ENCODE measurements at regions of chr19 and their contacts with region 1.

Region 1: DNA sequence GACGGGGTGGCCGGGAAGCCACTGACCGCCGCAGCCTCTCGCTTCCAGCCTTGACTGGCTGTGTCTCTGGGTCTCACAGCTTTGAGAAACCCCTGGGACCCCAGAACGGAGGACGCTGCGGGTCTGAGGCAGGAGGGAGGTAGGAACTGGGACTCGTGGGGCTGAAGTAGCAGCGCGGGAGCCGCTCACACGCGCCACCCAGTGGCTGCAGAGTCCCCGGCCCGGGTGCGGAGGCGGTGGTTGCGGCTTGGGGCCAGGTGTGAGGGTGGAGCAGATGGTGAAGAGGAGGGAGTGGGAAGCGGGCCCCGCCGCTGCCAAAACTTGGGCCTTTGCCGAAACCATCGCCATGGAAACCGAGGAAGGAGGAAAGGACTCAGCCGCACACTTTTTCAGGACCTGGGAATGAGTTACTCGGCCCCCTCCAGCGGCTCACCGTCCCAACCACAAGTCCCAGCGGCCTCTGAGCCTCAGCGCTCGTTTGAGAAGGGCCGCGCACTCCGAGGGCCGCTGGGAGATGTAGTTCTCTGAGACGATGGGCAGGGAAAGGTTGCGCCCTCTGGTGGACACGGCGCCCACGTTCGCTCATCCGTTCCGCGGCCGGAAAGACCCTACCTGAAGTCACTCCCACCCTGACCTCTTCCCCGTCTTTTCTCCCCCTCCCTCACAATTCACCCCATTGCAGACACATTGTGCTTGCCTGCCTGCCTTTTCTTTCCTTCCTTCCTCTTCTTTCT is 2.2 kb upstream of the SLC17A7 start:
- DNase-seq: peak; percentile 90 to 98 (median 95)
- H3K4me3 ChIP-seq: peak overlapping the region; percentile 45 to 83 (median 68)
- H3K27ac ChIP-seq: peak overlapping the region in 45 of 59 donors; percentile 1 to 87 (median 59)
- H3K27me3 ChIP-seq: peaks cover 0 to 41% (median 24%) of the 10 kb centered on the region in 45 donors
- CTCF ChIP-seq: peak; percentile 64 to 98 (median 86)

Region 2: GRCh38 chr19:48993175-48994034 is 450.1 kb before region 1 on chr19 and contains the starts of genes GYS1 and RUVBL2:
- intact Hi-C with region 1: loop called in 1 of 2 experiments (anchors 10 kb)
- DNase-seq: peak; percentile 98 to 100 (median 99)
- H3K4me3 ChIP-seq: peak within 1 kb of the TSS; percentile 63 to 100 (median 93)
- H3K27ac ChIP-seq: peak within 1 kb of the TSS; percentile 73 to 99 (median 96)
- H3K27me3 ChIP-seq: no peaks in the 10 kb centered on the region
- CTCF ChIP-seq: peak; percentile 74 to 99 (median 96)
- total RNA-seq, gene GYS1: 17.6 to 67.9 (median 37.0) TPM
- total RNA-seq, gene RUVBL2: 39.7 to 85.0 (median 53.9) TPM

Region 3: DNA sequence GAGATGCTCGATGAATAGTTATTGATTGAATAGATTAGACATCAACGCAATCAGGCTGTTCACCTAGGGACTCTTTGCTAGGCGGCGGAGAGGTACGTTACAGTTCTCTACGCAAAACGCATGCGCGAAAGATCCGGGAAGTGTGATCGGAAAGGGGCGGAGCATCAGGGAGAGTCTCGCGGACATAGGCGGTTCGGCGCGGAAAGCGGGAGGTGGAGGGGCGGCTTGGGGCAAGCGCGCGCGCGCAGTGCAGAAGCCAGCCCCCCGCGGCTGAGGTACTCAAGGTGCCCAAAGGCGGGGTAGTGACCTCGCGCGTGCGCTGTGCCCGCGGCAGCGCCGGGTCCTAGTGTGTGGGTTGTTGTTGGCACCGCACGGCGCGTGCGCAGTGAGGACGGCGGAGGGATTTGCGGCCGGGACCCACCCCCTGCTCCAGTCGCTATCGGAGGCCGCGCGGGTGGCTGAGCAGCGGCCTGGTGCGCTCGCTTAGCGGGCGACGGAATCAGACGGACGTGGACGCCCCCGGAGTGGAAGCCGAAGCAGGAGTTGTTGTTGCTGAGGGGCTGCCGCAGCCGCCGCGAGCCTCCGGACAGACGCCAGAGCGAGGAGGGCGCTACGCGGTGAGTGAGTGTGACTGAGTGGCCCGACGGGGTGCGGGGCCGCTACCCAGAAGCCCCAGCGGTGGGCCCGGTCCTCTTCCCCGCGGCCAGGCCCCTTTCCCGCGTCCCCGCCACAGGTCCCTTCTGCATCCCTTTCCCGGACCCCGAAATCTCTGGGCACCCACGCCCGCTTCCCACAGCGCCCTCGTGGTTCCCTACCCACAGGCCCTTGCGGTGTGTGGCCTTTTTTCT is 358.3 kb before region 1 on chr19 and contains the start of gene SNRNP70:
- intact Hi-C with region 1: loop called in 1 of 2 experiments (anchors 10 kb)
- DNase-seq: peak; percentile 96 to 98 (median 97)
- H3K4me3 ChIP-seq: peak within 1 kb of the TSS; percentile 60 to 100 (median 95)
- H3K27ac ChIP-seq: peak within 1 kb of the TSS; percentile 66 to 98 (median 93)
- H3K27me3 ChIP-seq: no peaks in the 10 kb centered on the region
- CTCF ChIP-seq: peak in 33 of 56 donors; percentile 3 to 63 (median 23)
- total RNA-seq, gene SNRNP70: 217 to 495 (median 342) TPM

Region 4: DNA sequence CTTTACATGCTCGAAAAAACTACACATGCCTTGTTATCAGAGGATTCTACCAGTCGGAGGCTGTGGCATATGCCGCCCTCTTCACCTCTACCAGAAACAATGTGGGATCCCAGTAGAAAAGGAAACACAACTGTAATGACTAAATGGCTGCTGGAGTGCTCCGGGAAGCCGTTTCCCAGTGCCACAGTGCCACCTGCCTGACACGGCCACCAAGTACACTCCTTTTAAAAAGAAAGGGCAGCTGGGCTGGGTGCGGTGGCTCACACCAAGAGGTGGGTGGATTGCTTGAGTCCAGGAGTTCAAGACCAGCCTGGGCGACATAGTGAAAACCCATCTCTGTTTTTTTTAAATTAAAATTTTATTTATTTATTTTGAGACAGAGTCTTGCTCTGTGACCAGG is 218.7 kb before region 1 on chr19:
- intact Hi-C with region 1: loop called in 1 of 2 experiments (anchors 10 kb)
- DNase-seq: peak in 3 of 10 donors; percentile 25 to 53 (median 52)
- H3K4me3 ChIP-seq: no peak overlapping the region
- H3K27ac ChIP-seq: no peak overlapping the region
- H3K27me3 ChIP-seq: peaks cover 0 to 8% (median 0%) of the 10 kb centered on the region in 45 donors
- CTCF ChIP-seq: peak in 41 of 56 donors; percentile 9 to 55 (median 29)

Region 5: DNA sequence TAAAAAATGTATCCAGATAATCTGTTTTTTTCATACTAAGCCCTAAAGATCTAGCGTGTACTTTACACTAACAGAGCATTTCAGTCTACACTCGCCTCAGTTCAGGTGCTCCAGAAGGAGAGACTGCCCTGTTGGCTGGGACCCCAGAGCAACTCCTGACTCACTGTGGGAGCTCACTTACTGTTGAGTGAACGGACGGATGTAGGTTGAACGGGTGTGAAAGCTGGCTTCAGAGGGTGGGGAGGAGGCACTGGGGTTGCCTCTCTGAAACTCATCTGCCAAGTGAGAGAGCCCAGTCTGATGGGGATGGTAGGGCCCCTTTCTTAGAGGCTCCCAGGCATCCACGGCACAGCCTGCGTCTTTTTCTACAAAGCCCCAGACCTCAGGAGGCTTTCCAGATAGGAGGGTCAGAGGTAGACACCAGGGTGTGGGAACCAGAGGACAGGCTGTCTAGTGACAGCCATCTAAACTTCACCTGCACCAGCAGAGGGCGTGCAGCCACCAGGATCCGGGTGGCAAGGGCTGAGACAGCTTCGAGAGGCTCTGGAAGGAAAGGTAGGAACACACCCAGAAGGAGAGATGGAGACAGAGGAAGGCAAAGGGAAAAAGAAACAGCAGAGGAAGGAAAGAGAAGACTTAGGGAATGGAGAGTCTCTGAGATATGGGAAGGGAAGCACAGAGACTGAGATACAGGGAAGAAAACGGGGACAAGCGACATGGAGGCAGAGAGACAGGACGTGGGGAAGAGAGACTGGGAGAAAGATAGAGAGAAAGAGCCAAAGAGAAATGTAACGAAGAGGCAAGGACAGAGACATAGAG is 51.7 kb before region 1 on chr19:
- intact Hi-C with region 1: loop called (anchors 1 to 2 kb)
- DNase-seq: peak; percentile 28 to 91 (median 73)
- H3K4me3 ChIP-seq: no peak overlapping the region
- H3K27ac ChIP-seq: peak overlapping the region in 2 of 59 donors; percentile 21 to 63
- H3K27me3 ChIP-seq: peaks cover 0 to 20% (median 0%) of the 10 kb centered on the region in 45 donors
- CTCF ChIP-seq: peak; percentile 24 to 85 (median 72)

Region 6: DNA sequence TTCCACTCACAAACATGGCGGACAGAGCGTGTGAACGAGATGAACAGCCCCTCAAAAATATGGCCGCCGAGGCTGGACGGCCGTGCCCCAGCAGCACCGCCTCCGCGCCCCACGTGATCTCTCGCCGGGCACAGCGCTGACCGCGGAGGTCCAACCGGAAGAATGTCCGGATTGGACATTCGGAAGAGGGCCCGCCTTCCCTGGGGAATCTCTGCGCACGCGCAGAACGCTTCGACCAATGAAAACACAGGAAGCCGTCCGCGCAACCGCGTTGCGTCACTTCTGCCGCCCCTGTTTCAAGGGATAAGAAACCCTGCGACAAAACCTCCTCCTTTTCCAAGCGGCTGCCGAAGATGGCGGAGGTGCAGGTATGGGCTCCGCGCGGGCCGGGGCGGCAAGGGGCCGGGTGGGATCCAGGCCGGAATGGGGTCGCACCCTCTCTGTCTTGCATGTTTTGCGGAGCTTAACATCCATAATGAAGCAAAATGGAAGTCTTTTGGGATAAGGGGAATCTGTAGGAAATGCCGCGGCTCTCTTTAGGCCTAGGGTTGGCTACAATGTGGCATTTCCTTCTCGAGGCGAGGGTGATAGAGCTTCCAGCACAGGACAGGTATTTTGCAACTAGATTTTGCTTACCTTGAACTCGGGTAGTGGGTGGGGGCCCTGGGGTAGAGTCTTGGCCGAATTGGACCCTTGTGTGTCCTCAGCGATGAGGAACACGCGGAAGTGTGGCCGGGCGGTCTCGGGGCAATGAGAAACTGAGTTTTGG is 43.9 kb after region 1 on chr19 and contains the start of gene RPL13A:
- intact Hi-C with region 1: no loop called
- DNase-seq: peak; percentile 97 to 100 (median 99)
- H3K4me3 ChIP-seq: peak within 1 kb of the TSS; percentile 72 to 100 (median 95)
- H3K27ac ChIP-seq: peak within 1 kb of the TSS; percentile 21 to 99 (median 95)
- H3K27me3 ChIP-seq: no peaks in the 10 kb centered on the region
- CTCF ChIP-seq: peak in 30 of 56 donors; percentile 10 to 65 (median 26)
- total RNA-seq, gene RPL13A: 564 to 1,173 (median 771) TPM